ENCODE measurements at regions of chr1 and their contacts with region 1.

Region 1: GRCh38 chr1:19651141-19651737 is 7.1 kb downstream of the NBL1 start:
- DNase-seq: peak; percentile 90
- H3K4me3 ChIP-seq: peak overlapping the region in 1 of 2 experiments; percentile 39; a peak in 1 of 4 replicates
- H3K27ac ChIP-seq: peak overlapping the region in 1 of 2 experiments; percentile 54; a peak in 2 of 4 replicates
- H3K4me1 ChIP-seq: peaks cover 0 to 35% of the 10 kb centered on the region in 2 experiments; a peak in 1 of 4 replicates
- H3K27me3 ChIP-seq: no peaks in the 10 kb centered on the region
- CTCF ChIP-seq: peak; percentile 69
- EP300 ChIP-seq: no peak
- RAD21 ChIP-seq: peak; percentile 92

Region 2: GRCh38 chr1:19240673-19241538 is 410.3 kb before region 1 on chr1:
- CTCF ChIA-PET with region 1: interaction called, 14 read pairs
- POLR2A ChIA-PET with region 1: no interaction called
- DNase-seq: peak; percentile 82
- H3K4me3 ChIP-seq: no peak overlapping the region; a peak in 1 of 4 replicates
- H3K27ac ChIP-seq: no peak overlapping the region
- H3K4me1 ChIP-seq: no peaks in the 10 kb centered on the region
- H3K27me3 ChIP-seq: no peaks in the 10 kb centered on the region
- CTCF ChIP-seq: peak; percentile 98
- EP300 ChIP-seq: no peak
- RAD21 ChIP-seq: peak; percentile 79

Region 3: GRCh38 chr1:19367584-19368041 is 283.6 kb before region 1 on chr1:
- CTCF ChIA-PET with region 1: interaction called, 10 read pairs
- POLR2A ChIA-PET with region 1: no interaction called
- DNase-seq: peak; percentile 64
- H3K4me3 ChIP-seq: no peak overlapping the region
- H3K27ac ChIP-seq: peak overlapping the region in 1 of 2 experiments; percentile 98; a peak in 2 of 4 replicates
- H3K4me1 ChIP-seq: peaks cover 0 to 62% of the 10 kb centered on the region in 2 experiments; a peak in 2 of 4 replicates
- H3K27me3 ChIP-seq: no peaks in the 10 kb centered on the region
- CTCF ChIP-seq: no peak
- EP300 ChIP-seq: no peak
- RAD21 ChIP-seq: no peak

Region 4: GRCh38 chr1:19405761-19406487 is 245.3 kb before region 1 on chr1:
- CTCF ChIA-PET with region 1: interaction called, 40 read pairs
- POLR2A ChIA-PET with region 1: no interaction called
- DNase-seq: peak; percentile 72
- H3K4me3 ChIP-seq: no peak overlapping the region
- H3K27ac ChIP-seq: peak overlapping the region in 1 of 2 experiments; percentile 95; a peak in 2 of 4 replicates
- H3K4me1 ChIP-seq: peaks cover 6 to 64% of the 10 kb centered on the region in 2 experiments; a peak in 3 of 4 replicates
- H3K27me3 ChIP-seq: no peaks in the 10 kb centered on the region
- CTCF ChIP-seq: no peak
- EP300 ChIP-seq: peak in 1 of 2 experiments; percentile 44; a peak in 1 of 4 replicates
- RAD21 ChIP-seq: no peak

Region 5: DNA sequence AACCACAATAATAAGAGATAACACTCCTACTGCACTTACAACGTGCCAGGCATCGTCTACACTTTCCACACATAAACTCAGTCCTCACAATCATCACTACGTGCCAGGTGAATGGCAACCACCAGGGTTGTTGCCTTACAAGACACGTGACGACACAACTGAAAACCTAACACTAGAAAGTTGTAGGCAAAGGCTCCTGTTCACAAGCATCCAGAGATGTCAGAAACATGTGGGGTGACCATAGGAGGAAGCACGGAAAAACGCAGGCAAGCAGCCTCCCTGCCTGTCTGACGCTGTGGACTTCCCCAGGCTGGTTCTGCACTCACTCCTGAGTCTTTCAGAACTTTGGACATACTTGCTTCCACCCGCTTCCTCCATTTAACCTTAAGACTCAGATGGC is 172.9 kb before region 1 on chr1:
- CTCF ChIA-PET with region 1: interaction called, 16 read pairs
- POLR2A ChIA-PET with region 1: no interaction called
- DNase-seq: no peak
- H3K4me3 ChIP-seq: no peak overlapping the region
- H3K27ac ChIP-seq: no peak overlapping the region; a peak in 1 of 4 replicates
- H3K4me1 ChIP-seq: peaks cover 14 to 64% of the 10 kb centered on the region in 2 experiments; a peak in 3 of 4 replicates
- H3K27me3 ChIP-seq: no peaks in the 10 kb centered on the region
- CTCF ChIP-seq: no peak
- EP300 ChIP-seq: no peak
- RAD21 ChIP-seq: no peak

Region 6: GRCh38 chr1:19668893-19669292 is 17.7 kb after region 1 on chr1:
- CTCF ChIA-PET with region 1: interaction called, 22 read pairs
- POLR2A ChIA-PET with region 1: no interaction called
- DNase-seq: no peak
- H3K4me3 ChIP-seq: no peak overlapping the region
- H3K27ac ChIP-seq: no peak overlapping the region
- H3K4me1 ChIP-seq: peaks cover 0 to 3% of the 10 kb centered on the region in 2 experiments; a peak in 1 of 4 replicates
- H3K27me3 ChIP-seq: no peaks in the 10 kb centered on the region; the same call in 1 of the 2 replicates
- CTCF ChIP-seq: no peak
- EP300 ChIP-seq: no peak
- RAD21 ChIP-seq: no peak